A549 (cell line): ENCODE measurements at regions of chr13 and their contacts with region 1.

Region 1: GRCh38 chr13:102643656-102644055 is 46.9 kb downstream of the TPP2 start:
- DNase-seq: no peak
- ATAC-seq: no peak
- H3K4me3 ChIP-seq: no peak overlapping the region
- H3K27ac ChIP-seq: no peak overlapping the region
- H3K4me1 ChIP-seq: no peaks in the 10 kb centered on the region
- CTCF ChIP-seq: no peak
- EP300 ChIP-seq: no peak
- POLR2A ChIP-seq: no peak
- RAD21 ChIP-seq: no peak

Region 2: GRCh38 chr13:102452831-102453230 is 190.8 kb before region 1 on chr13:
- CTCF ChIA-PET with region 1: no interaction called
- POLR2A ChIA-PET with region 1: no interaction called
- DNase-seq: no peak
- ATAC-seq: no peak
- H3K4me3 ChIP-seq: no peak overlapping the region
- H3K27ac ChIP-seq: no peak overlapping the region
- H3K4me1 ChIP-seq: no peaks in the 10 kb centered on the region
- CTCF ChIP-seq: no peak
- EP300 ChIP-seq: no peak
- POLR2A ChIP-seq: no peak
- RAD21 ChIP-seq: no peak

Region 3: DNA sequence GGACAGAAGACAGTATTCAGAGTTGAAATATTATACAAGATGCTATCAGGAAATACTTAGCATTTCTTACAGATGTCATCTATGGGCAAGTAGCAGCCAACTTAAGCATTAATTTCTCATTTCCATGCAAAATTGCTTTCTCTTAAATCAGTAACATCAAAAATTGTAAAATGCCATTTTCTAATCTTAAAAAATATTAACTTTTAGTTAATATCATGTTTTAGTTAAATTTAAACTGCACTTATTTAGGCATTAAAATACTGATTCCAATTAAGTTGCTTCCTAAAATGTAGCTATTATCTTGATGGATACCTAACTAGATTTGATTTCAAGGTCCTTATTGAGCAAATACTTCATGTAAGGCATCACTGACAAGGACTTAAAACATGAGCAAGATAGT is 23.4 kb after region 1 on chr13:
- CTCF ChIA-PET with region 1: no interaction called
- POLR2A ChIA-PET with region 1: interaction called, 12 read pairs
- DNase-seq: no peak
- ATAC-seq: no peak
- H3K4me3 ChIP-seq: no peak overlapping the region
- H3K27ac ChIP-seq: no peak overlapping the region
- H3K4me1 ChIP-seq: no peaks in the 10 kb centered on the region
- CTCF ChIP-seq: no peak
- EP300 ChIP-seq: no peak
- POLR2A ChIP-seq: no peak
- RAD21 ChIP-seq: no peak